Activated naive CD4-positive, alpha-beta T cell treated with anti-CD3 and anti-CD28 coated beads, Interleukin-2, amount 10 ng/mL, durations not matched to agents 7 days and 5 days (primary cell): ENCODE measurements at regions of chr12 and their contacts with region 1.

Region 1: GRCh38 chr12:49636979-49637755 is 13.8 kb downstream of the PRPF40B start:
- DNase-seq: peak; percentile 79
- H3K4me3 Mint-ChIP-seq: no peak overlapping the region
- H3K27ac Mint-ChIP-seq: no peak overlapping the region
- H3K4me1 Mint-ChIP-seq: peaks cover 7% of the 10 kb centered on the region
- H3K27me3 Mint-ChIP-seq: no peaks in the 10 kb centered on the region

Region 2: DNA sequence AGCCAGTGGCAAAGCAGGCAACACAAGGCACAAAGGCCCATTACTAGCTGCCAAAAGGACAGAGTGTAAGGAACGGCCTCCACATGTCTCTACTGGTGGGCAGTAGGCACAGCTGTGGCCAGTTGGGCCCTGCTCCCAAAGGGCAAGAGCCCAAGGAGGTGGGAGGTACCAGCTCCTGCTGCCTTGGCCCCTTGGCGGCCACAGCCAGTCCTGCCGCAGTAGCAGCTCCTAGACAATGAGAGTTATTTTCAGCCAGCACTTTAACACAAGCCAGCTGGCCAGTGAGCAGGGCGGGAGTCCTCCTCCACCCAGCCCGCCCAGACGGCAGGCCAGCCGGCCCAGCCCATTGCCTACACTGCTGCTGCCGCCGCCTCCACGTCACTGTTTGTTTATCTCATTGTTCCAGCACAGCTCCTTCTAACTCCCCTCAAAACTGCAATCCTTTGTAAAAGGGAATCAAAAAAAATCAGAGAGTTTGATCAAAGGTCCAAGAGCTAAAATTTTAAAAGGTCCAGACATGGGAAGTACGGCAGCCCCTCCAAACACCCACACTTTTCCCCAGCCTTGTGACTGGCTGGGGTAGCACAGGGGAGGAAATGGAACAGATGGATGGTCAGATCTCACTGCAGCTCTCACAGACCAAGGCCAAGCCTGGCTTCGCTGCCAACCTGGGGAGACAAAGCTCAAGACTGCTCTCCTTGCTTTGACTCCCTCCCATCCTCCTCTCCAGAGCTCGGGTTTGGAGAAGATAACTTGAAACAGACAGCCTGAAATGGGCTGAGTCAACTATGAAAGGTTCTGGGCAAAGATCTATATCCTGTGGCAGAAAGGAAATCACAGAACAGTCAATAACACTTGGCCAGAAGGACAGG is 36.5 kb after region 1 on chr12:
- CTCF ChIA-PET with region 1: interaction called, 11 read pairs
- DNase-seq: no peak
- H3K4me3 Mint-ChIP-seq: no peak overlapping the region
- H3K27ac Mint-ChIP-seq: peak overlapping the region; percentile 68
- H3K4me1 Mint-ChIP-seq: peaks cover 75% of the 10 kb centered on the region
- H3K27me3 Mint-ChIP-seq: no peaks in the 10 kb centered on the region

Region 3: GRCh38 chr12:49720214-49720613 is 83.0 kb after region 1 on chr12:
- CTCF ChIA-PET with region 1: interaction called, 370 read pairs
- DNase-seq: no peak
- H3K4me3 Mint-ChIP-seq: no peak overlapping the region
- H3K27ac Mint-ChIP-seq: no peak overlapping the region
- H3K4me1 Mint-ChIP-seq: no peaks in the 10 kb centered on the region
- H3K27me3 Mint-ChIP-seq: peaks cover 42% of the 10 kb centered on the region

Region 4: GRCh38 chr12:49763006-49763591 is 125.9 kb after region 1 on chr12:
- CTCF ChIA-PET with region 1: interaction called, 21 read pairs
- DNase-seq: peak; percentile 87
- H3K4me3 Mint-ChIP-seq: peak overlapping the region; percentile 19
- H3K27ac Mint-ChIP-seq: peak overlapping the region; percentile 91
- H3K4me1 Mint-ChIP-seq: peaks cover 44% of the 10 kb centered on the region
- H3K27me3 Mint-ChIP-seq: peaks cover 7% of the 10 kb centered on the region

Region 5: GRCh38 chr12:49903695-49904423 is 266.7 kb after region 1 on chr12 and contains the start of gene FAIM2:
- CTCF ChIA-PET with region 1: no interaction called
- DNase-seq: peak; percentile 70
- H3K4me3 Mint-ChIP-seq: peak within 1 kb of the TSS; percentile 68
- H3K27ac Mint-ChIP-seq: no peak within 1 kb of the TSS
- H3K4me1 Mint-ChIP-seq: peaks cover 14% of the 10 kb centered on the region
- H3K27me3 Mint-ChIP-seq: peaks cover 63% of the 10 kb centered on the region